Activated CD4-positive, alpha-beta memory T cell treated with anti-CD3 and anti-CD28 coated beads, Interleukin-2, amount 10 ng/mL, durations not matched to agents 7 days and 5 days (primary cell): ENCODE measurements at regions of chr17 and their contacts with region 1.

Region 1: GRCh38 chr17:35214631-35215273 is 20.6 kb upstream of the SLC35G3 start:
- DNase-seq: peak; percentile 48
- H3K4me3 Mint-ChIP-seq: peak overlapping the region; percentile 64
- H3K27ac Mint-ChIP-seq: peak overlapping the region; percentile 98
- H3K4me1 Mint-ChIP-seq: peaks cover 80% of the 10 kb centered on the region
- H3K27me3 Mint-ChIP-seq: no peaks in the 10 kb centered on the region

Region 2: DNA sequence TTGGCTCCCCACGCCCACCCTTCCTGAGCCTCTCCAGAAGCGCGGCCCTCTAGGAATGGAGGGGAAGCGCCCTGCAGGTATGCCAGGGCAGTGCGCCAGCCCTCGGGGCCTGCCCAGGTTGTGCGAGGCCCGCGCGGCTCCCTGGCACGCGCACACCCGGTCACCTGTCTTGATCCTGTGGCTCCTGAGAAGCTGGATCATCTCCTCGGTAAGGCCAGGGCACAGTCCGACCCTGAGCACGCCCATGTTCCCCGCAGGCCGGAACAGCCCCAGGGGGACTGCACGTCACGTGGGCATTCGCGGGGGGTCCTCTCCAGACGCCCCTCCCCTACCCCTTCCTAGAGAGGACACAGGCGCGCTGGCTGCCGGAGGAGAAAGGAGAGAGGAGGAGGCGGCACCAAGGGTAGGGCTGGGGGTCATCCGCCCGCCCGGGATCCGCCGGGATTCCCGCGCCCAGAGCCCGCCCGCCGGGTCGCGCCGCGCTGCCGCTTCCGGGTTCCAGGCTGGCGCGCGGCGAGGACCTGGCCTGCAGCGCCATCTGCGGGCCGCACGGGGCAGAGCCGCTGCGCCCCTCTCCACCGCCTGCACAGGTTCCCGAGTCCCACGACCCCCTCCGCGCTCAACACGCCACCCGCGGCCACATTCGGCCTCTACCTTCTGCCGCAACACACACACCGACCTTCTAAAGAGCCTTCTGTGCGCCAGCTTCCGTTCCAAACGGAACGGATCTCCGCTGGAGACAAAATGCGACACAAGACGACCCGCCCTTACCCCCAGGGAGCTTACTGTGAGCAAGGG is 95.2 kb before region 1 on chr17 and contains the start of gene RAD51D:
- CTCF ChIA-PET with region 1: no interaction called
- POLR2A ChIA-PET with region 1: interaction called, 12 read pairs
- DNase-seq: peak; percentile 83
- H3K4me3 Mint-ChIP-seq: peak within 1 kb of the TSS; percentile 79
- H3K27ac Mint-ChIP-seq: peak within 1 kb of the TSS; percentile 78
- H3K4me1 Mint-ChIP-seq: peaks cover 41% of the 10 kb centered on the region
- H3K27me3 Mint-ChIP-seq: no peaks in the 10 kb centered on the region
- total RNA-seq, gene RAD51D: 25.6 to 25.9 TPM

Region 3: GRCh38 chr17:35170968-35171771 is 43.6 kb before region 1 on chr17:
- CTCF ChIA-PET with region 1: interaction called, 5 read pairs
- POLR2A ChIA-PET with region 1: interaction called, 72 read pairs
- DNase-seq: no peak
- H3K4me3 Mint-ChIP-seq: no peak overlapping the region
- H3K27ac Mint-ChIP-seq: peak overlapping the region; percentile 26
- H3K4me1 Mint-ChIP-seq: peaks cover 23% of the 10 kb centered on the region
- H3K27me3 Mint-ChIP-seq: no peaks in the 10 kb centered on the region

Region 4: GRCh38 chr17:35227546-35227945 is 12.8 kb after region 1 on chr17:
- CTCF ChIA-PET with region 1: no interaction called
- POLR2A ChIA-PET with region 1: interaction called, 11 read pairs
- DNase-seq: no peak
- H3K4me3 Mint-ChIP-seq: no peak overlapping the region
- H3K27ac Mint-ChIP-seq: no peak overlapping the region
- H3K4me1 Mint-ChIP-seq: peaks cover 7% of the 10 kb centered on the region
- H3K27me3 Mint-ChIP-seq: no peaks in the 10 kb centered on the region

Region 5: GRCh38 chr17:35257208-35257659 is 42.5 kb after region 1 on chr17:
- CTCF ChIA-PET with region 1: no interaction called
- POLR2A ChIA-PET with region 1: interaction called, 10 read pairs
- DNase-seq: no peak
- H3K4me3 Mint-ChIP-seq: no peak overlapping the region
- H3K27ac Mint-ChIP-seq: no peak overlapping the region
- H3K4me1 Mint-ChIP-seq: peaks cover 50% of the 10 kb centered on the region
- H3K27me3 Mint-ChIP-seq: no peaks in the 10 kb centered on the region

Region 6: DNA sequence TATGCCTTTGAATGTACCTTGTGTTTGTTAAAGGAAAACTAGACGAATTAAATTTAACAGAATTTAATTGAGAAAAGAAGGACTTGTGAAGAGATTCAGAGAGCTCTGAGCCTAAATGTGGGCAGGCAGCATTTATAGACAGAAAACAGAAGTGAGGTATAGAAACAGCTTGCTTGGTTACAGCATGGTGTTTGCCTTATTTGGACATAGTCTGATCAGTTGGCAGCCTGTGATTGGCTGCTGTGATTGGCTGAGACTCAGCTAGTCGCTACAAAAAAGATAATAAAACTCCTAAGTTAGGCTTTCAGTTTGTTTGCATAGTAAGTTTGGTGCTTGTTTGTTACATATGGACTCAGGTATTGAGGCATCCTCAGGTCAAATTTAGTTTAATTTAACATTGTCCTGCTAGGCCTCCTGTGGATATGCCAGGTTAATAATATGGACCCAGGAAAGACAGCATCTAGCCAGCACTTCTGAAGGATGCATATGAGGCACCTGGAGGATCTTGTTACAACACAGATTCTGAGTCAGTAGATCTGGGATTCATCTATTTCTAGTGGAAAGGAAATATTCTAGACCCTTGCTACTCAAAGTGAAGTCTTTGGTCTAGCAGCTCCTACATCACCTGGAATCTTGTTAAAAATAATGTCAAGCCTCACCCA is 71.5 kb after region 1 on chr17:
- CTCF ChIA-PET with region 1: no interaction called
- POLR2A ChIA-PET with region 1: no interaction called
- DNase-seq: no peak
- H3K4me3 Mint-ChIP-seq: no peak overlapping the region
- H3K27ac Mint-ChIP-seq: no peak overlapping the region
- H3K4me1 Mint-ChIP-seq: peaks cover 19% of the 10 kb centered on the region
- H3K27me3 Mint-ChIP-seq: peaks cover 9% of the 10 kb centered on the region

Region 7: GRCh38 chr17:35540589-35541404 is 326.0 kb after region 1 on chr17:
- CTCF ChIA-PET with region 1: interaction called, 23 read pairs
- POLR2A ChIA-PET with region 1: interaction called, 182 read pairs
- DNase-seq: peak; percentile 69
- H3K4me3 Mint-ChIP-seq: peak overlapping the region; percentile 86
- H3K27ac Mint-ChIP-seq: peak overlapping the region; percentile 100
- H3K4me1 Mint-ChIP-seq: peaks cover 53% of the 10 kb centered on the region
- H3K27me3 Mint-ChIP-seq: no peaks in the 10 kb centered on the region